ENCODE measurements at regions of chr6 and their contacts with region 1.

Region 1: GRCh38 chr6:28335564-28336283 is at the start of gene ZSCAN31:
- DNase-seq: peak; percentile 83

Region 2: GRCh38 chr6:28281288-28282064 is 54.2 kb before region 1 on chr6 and contains the start of gene PGBD1:
- CTCF ChIA-PET with region 1: interaction called, 3 read pairs
- POLR2A ChIA-PET with region 1: interaction called, 11 read pairs
- DNase-seq: peak; percentile 87

Region 3: GRCh38 chr6:28311139-28311823 is 24.4 kb before region 1 on chr6:
- CTCF ChIA-PET with region 1: no interaction called
- POLR2A ChIA-PET with region 1: interaction called, 13 read pairs
- DNase-seq: no peak

Region 4: GRCh38 chr6:28349892-28350737 is 14.4 kb after region 1 on chr6 and contains the start of gene ZKSCAN3:
- CTCF ChIA-PET with region 1: no interaction called
- POLR2A ChIA-PET with region 1: interaction called, 24 read pairs
- DNase-seq: peak; percentile 81

Region 5: GRCh38 chr6:28355743-28356665 is 20.3 kb after region 1 on chr6:
- CTCF ChIA-PET with region 1: interaction called, 3 read pairs
- POLR2A ChIA-PET with region 1: interaction called, 23 read pairs
- DNase-seq: peak; percentile 67

Region 6: GRCh38 chr6:28606424-28607400 is 271.0 kb after region 1 on chr6:
- CTCF ChIA-PET with region 1: interaction called, 11 read pairs
- POLR2A ChIA-PET with region 1: no interaction called
- DNase-seq: peak; percentile 82

Measured in HEK293T (cell line).